Posterior cingulate gyrus (tissue), 11 donors: ENCODE measurements at regions of chr7 and their contacts with region 1.

Region 1: DNA sequence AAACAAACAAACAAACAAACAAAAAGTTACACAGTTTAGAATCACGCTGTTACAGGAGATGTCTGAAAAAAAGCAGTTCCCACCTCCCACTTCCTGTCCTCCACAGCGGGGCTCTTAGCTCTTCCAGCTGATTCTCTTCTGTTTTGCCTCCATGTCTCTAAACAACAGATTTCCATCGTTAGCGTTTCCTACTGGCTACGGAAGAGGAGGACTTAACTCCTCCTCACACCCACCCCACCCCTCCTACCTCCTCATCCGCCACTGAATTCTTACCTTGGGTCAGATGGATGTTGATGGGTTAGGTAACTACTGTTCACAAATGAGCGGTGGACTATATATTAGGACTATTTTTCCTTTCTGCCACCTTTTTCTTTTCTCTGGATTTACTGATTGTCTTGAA is 36.8 kb upstream of the NUB1 start:
- DNase-seq: no peak

Region 2: DNA sequence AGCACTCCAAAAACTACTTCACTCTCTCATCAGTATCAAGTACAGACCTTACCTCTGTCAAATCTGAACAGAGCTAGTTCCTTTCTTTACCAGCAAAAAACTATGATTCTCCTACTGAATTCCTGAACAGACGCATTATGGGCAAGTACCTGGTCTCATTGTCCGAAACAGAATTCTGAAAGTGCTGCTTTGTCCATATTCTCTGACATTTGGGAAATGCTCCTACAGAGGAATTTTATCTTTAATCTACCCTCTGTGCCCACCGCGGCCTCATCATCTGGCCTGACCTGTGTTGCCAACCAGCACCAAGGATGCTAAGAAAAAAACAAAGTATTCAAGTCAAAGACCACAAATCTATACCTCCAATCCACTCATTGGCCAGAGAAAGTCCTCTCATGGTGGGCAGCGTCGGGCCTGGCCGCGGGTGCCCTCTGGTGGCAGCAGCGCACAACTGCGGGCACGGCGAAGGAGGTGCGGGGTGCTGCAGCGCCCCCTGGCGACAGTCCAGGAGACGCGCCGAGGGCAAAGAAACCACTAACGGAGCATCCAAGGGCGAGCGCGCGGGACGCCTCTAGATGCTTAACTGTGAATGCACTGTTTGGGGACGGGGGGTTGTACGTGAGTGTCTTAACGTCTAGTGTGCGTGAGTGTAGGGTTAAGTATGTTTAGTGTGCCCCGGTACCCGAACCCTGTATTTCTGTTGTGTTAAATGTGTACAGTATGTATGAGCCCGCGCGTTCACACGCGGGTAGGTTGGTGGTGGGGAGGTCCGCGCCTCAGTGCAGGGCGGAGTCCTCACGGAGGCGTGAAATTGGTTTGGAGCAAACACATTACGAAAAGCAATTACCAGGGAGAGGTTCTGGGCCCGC is 132.3 kb before region 1 on chr7:
- intact Hi-C with region 1: loop called (anchors 5 kb)
- DNase-seq: peak; percentile 68 to 98 (median 81)

Region 3: GRCh38 chr7:151244196-151244840 is 60.5 kb before region 1 on chr7:
- intact Hi-C with region 1: loop called (anchors 2 kb)
- DNase-seq: peak in 4 of 10 donors; percentile 37 to 68 (median 56)

Region 4: DNA sequence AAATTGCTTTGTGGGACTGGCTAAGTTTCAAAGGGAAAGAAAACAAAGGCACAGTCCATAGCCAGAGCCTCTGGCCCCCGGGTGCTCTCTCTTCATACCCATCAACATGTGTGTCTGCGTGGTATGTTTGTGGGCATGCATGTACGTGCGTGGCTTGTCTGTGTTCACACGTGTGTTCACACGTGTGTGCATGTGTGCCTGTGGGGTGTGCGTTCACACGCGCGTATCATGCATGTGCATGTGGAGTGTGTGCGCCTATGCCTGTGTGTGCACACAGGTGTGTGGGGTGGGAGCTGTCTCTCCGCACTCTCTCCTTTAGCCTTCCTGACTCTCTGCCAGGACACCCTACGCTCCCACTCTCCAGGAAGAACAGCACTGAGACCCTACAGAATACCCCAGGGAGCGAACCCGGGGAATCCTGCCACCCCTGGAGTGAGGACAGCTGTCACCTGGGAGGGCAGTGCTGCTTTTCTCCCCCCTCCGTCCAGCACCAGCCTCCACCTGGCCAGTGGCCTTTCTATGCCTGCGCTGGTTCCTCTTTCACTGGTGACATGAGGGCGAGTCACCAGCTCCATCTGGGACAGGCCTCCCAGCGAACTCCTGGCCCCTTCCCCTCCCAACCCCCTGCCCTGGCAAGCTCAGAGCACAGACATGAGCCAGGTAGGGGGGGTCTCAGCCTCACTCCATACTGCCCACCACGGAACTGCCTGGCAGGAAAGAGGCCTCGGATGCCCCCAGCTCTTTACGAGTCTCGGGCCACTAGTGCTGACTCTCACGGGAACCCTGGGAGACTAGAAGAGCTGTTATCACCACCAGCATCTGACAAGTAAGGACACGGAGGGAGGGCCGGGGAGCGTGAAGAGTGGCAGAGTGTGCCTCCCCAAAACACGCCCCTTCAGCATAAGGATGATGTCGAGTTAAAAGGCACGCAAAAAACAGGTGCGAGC is 88.4 kb after region 1 on chr7:
- intact Hi-C with region 1: no loop called
- DNase-seq: peak in 3 of 10 donors; percentile 15 to 54 (median 48)

Region 5: GRCh38 chr7:151608031-151608551 is 303.2 kb after region 1 on chr7:
- intact Hi-C with region 1: no loop called
- DNase-seq: peak in 2 of 10 donors; percentile 72 to 74